ENCODE measurements at regions of chr4 and their contacts with region 1.

Region 1: GRCh38 chr4:47824840-47825239 is 13.0 kb downstream of the CORIN start:
- DNase-seq: peak; percentile 59 to 63
- ATAC-seq: peak; percentile 88 to 95 (median 93)
- H3K4me3 ChIP-seq: peak overlapping the region in 2 of 10 donors; percentile 12
- H3K27ac ChIP-seq: peak overlapping the region in 9 of 10 donors; percentile 56 to 84 (median 72)
- H3K4me1 ChIP-seq: peaks cover 0 to 27% (median 0%) of the 10 kb centered on the region in 9 donors
- H3K27me3 ChIP-seq: no peaks in the 10 kb centered on the region
- CTCF ChIP-seq: no peak

Region 2: DNA sequence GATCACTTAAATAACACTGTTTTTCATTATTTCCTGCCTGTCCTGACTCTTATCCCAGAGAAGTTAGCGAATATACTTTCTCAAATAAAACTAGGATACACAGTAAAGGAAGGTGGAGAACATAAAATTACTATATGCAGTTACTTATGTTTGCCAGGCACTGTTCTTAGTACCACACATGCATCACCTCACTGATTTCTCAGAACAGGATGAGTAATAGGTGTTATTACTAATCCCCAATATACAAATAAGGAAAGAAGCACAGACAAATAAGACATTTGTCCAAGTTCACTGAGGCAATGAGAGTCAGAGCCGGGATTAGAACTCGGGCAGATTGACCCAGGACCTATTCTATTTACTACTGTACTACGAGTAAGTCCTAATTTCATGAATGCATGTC is 78.7 kb before region 1 on chr4:
- intact Hi-C with region 1: loop called in 2 of 10 experiments (anchors 5 kb)
- DNase-seq: no peak
- ATAC-seq: no peak
- H3K4me3 ChIP-seq: no peak overlapping the region
- H3K27ac ChIP-seq: peak overlapping the region in 6 of 10 donors; percentile 14 to 85 (median 72)
- H3K4me1 ChIP-seq: peaks cover 0 to 20% (median 10%) of the 10 kb centered on the region in 9 donors
- H3K27me3 ChIP-seq: no peaks in the 10 kb centered on the region
- CTCF ChIP-seq: no peak

Region 3: DNA sequence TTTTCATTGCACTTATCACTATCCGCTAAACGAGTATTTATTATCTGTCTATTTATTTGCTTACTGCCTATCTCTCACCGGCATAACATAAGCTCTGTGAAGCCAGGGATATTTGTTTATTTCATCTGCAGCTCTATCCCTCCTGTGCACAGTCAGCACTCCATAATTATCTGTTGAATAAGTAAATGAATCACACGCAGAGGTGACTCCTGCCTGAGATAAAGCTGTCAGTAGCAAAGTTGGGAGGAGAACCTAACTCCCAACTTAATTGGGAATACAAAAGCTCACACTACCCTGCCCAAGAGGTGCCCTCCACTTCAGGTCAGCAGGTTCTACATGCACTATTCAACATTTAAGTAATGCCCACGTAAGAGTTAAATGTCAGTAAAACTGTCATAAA is 72.6 kb before region 1 on chr4:
- intact Hi-C with region 1: loop called in 2 of 10 experiments (anchors 5 kb)
- DNase-seq: no peak
- ATAC-seq: peak in 6 of 8 donors; percentile 42 to 77 (median 56)
- H3K4me3 ChIP-seq: no peak overlapping the region
- H3K27ac ChIP-seq: peak overlapping the region in 7 of 10 donors; percentile 7 to 85 (median 56)
- H3K4me1 ChIP-seq: peaks cover 0 to 20% (median 5%) of the 10 kb centered on the region in 9 donors
- H3K27me3 ChIP-seq: no peaks in the 10 kb centered on the region
- CTCF ChIP-seq: no peak

Region 4: GRCh38 chr4:47786958-47787370 is 37.9 kb before region 1 on chr4:
- intact Hi-C with region 1: loop called in 3 of 10 experiments (anchors 5 kb)
- DNase-seq: no peak
- ATAC-seq: no peak
- H3K4me3 ChIP-seq: no peak overlapping the region
- H3K27ac ChIP-seq: peak overlapping the region in 1 of 10 donors; percentile 21
- H3K4me1 ChIP-seq: peaks cover 0 to 18% (median 0%) of the 10 kb centered on the region in 9 donors
- H3K27me3 ChIP-seq: no peaks in the 10 kb centered on the region
- CTCF ChIP-seq: no peak

Region 5: GRCh38 chr4:48262926-48263325 is 438.1 kb after region 1 on chr4:
- intact Hi-C with region 1: no loop called
- DNase-seq: peak in 1 of 2 donors; percentile 7
- ATAC-seq: peak in 3 of 8 donors; percentile 49 to 59 (median 57)
- H3K4me3 ChIP-seq: no peak overlapping the region
- H3K27ac ChIP-seq: peak overlapping the region in 1 of 10 donors; percentile 34
- H3K4me1 ChIP-seq: peaks cover 0 to 39% (median 0%) of the 10 kb centered on the region in 9 donors
- H3K27me3 ChIP-seq: no peaks in the 10 kb centered on the region
- CTCF ChIP-seq: no peak

Measured in heart right ventricle (tissue), 16 donors.